A549 (cell line): ENCODE measurements at regions of chr9 and their contacts with region 1.

Region 1: DNA sequence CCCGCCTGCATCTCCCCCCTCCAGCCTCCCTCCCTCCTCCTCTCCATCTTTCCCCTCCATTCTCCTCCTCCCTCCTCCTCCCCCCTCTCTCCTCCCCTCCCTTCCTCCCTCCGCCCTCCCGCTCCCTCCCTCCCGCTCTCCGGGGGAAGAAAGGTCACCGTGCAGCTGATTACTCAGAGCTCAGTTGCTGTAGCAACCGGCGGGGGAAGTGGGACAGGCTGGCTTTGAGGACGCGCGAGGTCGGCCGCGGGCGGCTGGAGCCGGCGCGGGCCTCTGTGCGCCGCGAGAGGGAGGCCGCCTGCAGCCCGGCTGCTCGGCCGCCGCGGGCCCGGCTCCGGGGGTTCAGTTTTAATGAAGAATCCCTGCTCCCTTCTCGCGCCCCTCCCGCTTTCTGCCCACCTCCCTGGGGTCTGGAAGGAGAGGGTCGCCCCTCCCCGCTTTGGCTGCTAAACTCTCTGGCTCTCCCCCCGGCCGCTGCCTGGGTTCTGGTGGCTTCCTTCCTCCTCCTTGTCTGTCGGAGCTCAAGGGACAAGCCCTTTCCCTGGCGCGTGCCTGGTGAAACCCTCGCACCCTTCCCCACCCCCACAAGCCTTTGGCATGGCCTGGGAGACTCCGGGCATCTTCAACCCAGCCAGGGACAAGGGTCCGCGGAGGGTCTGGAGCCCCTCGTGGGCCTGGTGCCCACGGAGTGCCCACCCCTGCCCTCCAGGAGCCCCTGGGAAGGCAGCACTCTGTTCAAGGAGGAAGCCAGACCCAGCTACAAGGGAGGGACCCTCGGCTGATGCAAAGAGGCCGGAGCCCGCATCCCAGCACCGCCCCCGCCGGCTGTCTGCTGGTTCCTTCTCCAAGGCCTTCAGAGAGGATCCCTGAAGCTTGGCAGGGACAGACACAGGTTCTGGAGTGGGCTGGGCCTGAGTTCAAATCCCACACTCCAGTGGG is 160.3 kb downstream of the C9orf50 start:
- DNase-seq: peak; percentile 97 to 99
- ATAC-seq: peak; percentile 87 to 88
- H3K4me3 ChIP-seq: peak overlapping the region; percentile 37
- H3K27ac ChIP-seq: peak overlapping the region; percentile 98
- H3K4me1 ChIP-seq: peaks cover 46% of the 10 kb centered on the region
- CTCF ChIP-seq: peak; percentile 16; the same call in 1 of the 3 replicates
- EP300 ChIP-seq: peak; percentile 28 to 37; a peak in 2 of 5 replicates
- POLR2A ChIP-seq: no peak; the same call in none of the 2 replicates
- RAD21 ChIP-seq: no peak; a peak in 2 of 5 replicates

Region 2: DNA sequence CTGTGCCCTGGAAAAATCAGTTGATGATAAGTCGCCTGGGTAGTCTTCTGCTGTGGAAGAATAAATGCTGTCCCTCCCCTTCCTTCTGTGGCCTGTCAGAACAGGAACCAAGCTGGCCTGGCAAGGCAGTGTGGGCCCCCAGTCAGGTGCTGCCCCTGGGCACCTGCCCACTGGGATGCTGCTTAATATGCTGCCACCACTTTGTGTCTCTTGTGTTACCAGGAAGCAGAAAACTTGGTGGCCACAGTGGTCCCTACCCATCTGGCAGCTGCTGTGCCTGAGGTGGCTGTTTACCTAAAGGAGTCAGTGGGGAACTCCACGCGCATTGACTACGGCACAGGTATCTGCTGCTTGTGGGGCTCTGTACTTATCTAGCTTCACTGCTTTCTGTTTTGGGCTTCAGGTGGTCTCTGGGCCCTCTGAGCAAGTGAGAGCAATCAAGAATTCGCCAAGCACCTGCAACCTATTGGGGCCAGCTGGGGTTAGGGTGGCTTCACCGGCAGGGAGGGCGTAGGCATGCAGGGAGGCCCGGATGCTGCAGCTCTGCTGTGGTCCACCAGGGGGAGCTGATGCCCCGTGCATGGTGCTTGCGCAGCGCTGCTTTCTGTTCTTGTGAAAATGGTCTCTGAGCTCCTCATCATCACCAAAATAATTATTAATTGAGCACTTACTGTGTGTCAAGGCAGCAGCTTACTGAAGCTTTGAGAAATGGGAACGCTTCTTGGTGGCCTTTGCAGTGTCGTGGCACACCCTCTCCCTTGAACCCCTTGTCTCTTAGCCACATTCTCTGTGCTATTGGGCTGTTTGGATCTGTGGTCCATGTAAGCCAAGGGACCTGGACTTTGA is 329.1 kb before region 1 on chr9:
- CTCF ChIA-PET with region 1: interaction called, 10 read pairs
- POLR2A ChIA-PET with region 1: no interaction called
- DNase-seq: peak; percentile 72 to 93
- ATAC-seq: peak; percentile 93 to 96
- H3K4me3 ChIP-seq: no peak overlapping the region
- H3K27ac ChIP-seq: peak overlapping the region; percentile 30 to 63; a peak in 4 of 6 replicates
- H3K4me1 ChIP-seq: peaks cover 7% of the 10 kb centered on the region; the same call in 1 of the 3 replicates
- CTCF ChIP-seq: peak; percentile 94
- EP300 ChIP-seq: no peak
- POLR2A ChIP-seq: no peak
- RAD21 ChIP-seq: peak; percentile 93 to 95

Region 3: DNA sequence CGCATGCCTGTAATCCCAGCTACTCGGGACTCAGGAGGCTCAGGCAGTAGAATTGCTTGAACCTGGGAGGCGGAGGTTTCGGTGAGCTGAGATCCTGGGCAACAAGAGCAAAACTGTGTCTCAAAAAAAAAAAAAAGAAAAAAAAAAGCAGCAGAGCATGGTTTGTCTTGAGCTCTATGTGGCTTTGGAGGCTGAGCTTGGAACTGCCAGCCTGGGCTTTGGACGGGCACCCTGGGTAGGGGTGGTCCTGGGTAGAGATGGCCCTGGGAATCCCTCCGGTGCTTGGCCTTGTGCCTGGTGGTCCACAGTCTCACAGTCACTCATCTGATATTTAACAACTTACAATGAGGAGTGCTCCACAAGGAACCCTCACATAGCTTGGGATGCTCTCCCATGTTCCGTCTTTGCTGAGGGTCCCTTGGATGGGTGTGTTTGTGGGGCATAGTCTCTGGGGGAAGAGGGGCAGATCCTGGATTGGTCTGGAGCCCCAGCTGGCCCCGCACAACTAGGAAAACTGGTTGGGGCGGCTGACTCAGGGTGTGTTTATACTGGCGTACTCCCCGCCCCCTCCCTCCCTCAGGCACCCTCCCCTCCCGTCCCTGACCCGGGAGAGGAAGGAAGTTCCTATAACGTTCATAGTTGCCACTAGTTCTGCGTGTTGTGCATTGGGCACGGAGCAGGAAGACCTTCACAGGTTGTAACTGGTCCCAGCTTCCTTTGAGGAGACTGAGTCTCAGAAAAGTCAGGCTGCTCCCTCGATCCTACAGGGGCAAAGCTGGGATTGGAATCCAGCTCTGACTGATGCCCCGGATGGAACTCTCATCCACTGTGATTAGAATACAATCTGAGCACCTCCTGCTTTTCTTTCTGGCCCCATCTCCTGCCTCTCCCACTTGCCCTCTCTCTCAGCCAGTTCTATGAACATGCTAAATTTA is 293.7 kb before region 1 on chr9:
- CTCF ChIA-PET with region 1: no interaction called
- POLR2A ChIA-PET with region 1: interaction called, 10 read pairs
- DNase-seq: peak; percentile 79 to 97
- ATAC-seq: peak; percentile 79 to 88
- H3K4me3 ChIP-seq: peak overlapping the region; percentile 9; the same call in 1 of the 3 replicates
- H3K27ac ChIP-seq: peak overlapping the region; percentile 94 to 99
- H3K4me1 ChIP-seq: peaks cover 48% of the 10 kb centered on the region
- CTCF ChIP-seq: no peak
- EP300 ChIP-seq: no peak
- POLR2A ChIP-seq: peak; percentile 70
- RAD21 ChIP-seq: no peak

Region 4: DNA sequence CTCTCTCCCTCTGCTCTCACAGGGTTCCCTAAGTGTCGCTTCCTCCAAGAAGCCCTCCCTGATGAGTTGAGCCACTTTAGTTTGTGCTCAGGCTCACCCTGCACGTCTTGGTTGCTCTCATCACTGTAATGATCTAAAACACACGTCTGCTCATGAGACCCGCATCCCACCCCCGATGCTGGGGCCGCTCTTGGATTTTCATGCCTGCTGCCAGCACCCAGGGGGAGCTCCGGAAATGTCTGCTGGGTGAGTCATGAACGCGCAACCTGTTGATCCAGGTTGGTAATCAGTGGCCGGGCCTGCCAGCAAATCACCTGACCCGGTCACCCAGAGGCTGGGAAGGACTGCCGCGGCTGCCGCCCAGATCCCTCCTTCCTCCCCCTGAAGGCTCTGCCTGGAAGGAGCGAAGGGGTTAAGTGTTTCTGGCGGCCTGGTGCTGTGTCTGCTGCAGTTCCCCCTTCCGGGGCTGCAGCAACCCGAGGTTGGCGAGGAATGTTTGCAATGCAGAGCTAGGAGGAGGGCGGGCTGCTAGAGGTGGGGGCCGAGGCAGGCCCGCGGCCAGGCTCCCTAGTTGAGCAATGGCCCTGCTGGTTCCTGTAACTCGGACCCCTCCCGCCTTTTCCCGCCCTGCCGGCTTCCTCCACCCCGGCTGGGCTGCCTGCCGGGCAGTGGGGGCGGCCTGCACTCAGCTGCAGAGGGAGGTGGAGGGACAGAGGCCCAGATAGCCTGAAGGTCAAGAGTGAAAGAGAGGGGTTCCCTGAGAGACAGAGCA is 126.5 kb before region 1 on chr9:
- CTCF ChIA-PET with region 1: interaction called, 4 read pairs
- POLR2A ChIA-PET with region 1: interaction called, 22 read pairs
- DNase-seq: peak; percentile 95 to 99
- ATAC-seq: peak; percentile 93 to 94
- H3K4me3 ChIP-seq: peak overlapping the region; percentile 7; the same call in 1 of the 3 replicates
- H3K27ac ChIP-seq: peak overlapping the region; percentile 99 to 100
- H3K4me1 ChIP-seq: peaks cover 58% of the 10 kb centered on the region
- CTCF ChIP-seq: peak; percentile 13; the same call in 1 of the 3 replicates
- EP300 ChIP-seq: peak; percentile 95 to 98
- POLR2A ChIP-seq: peak; percentile 4; the same call in 1 of the 2 replicates
- RAD21 ChIP-seq: peak; percentile 25 to 78; a peak in 4 of 5 replicates

Region 5: GRCh38 chr9:129413537-129414376 is 46.8 kb before region 1 on chr9:
- CTCF ChIA-PET with region 1: no interaction called
- POLR2A ChIA-PET with region 1: interaction called, 16 read pairs
- DNase-seq: peak; percentile 86 to 97
- ATAC-seq: peak; percentile 80 to 84
- H3K4me3 ChIP-seq: peak overlapping the region; percentile 41
- H3K27ac ChIP-seq: peak overlapping the region; percentile 98 to 100
- H3K4me1 ChIP-seq: peaks cover 63% of the 10 kb centered on the region
- CTCF ChIP-seq: no peak
- EP300 ChIP-seq: peak; percentile 8 to 58; a peak in 2 of 5 replicates
- POLR2A ChIP-seq: no peak
- RAD21 ChIP-seq: peak in 1 of 2 experiments; percentile 60; a peak in 3 of 5 replicates

Region 6: GRCh38 chr9:129473523-129474229 is 13.1 kb after region 1 on chr9:
- CTCF ChIA-PET with region 1: interaction called, 12 read pairs
- POLR2A ChIA-PET with region 1: interaction called, 3 read pairs
- DNase-seq: no peak
- ATAC-seq: no peak
- H3K4me3 ChIP-seq: no peak overlapping the region
- H3K27ac ChIP-seq: peak overlapping the region; percentile 76 to 99; a peak in 5 of 6 replicates
- H3K4me1 ChIP-seq: peaks cover 57% of the 10 kb centered on the region
- CTCF ChIP-seq: no peak
- EP300 ChIP-seq: no peak
- POLR2A ChIP-seq: no peak
- RAD21 ChIP-seq: no peak

Region 7: DNA sequence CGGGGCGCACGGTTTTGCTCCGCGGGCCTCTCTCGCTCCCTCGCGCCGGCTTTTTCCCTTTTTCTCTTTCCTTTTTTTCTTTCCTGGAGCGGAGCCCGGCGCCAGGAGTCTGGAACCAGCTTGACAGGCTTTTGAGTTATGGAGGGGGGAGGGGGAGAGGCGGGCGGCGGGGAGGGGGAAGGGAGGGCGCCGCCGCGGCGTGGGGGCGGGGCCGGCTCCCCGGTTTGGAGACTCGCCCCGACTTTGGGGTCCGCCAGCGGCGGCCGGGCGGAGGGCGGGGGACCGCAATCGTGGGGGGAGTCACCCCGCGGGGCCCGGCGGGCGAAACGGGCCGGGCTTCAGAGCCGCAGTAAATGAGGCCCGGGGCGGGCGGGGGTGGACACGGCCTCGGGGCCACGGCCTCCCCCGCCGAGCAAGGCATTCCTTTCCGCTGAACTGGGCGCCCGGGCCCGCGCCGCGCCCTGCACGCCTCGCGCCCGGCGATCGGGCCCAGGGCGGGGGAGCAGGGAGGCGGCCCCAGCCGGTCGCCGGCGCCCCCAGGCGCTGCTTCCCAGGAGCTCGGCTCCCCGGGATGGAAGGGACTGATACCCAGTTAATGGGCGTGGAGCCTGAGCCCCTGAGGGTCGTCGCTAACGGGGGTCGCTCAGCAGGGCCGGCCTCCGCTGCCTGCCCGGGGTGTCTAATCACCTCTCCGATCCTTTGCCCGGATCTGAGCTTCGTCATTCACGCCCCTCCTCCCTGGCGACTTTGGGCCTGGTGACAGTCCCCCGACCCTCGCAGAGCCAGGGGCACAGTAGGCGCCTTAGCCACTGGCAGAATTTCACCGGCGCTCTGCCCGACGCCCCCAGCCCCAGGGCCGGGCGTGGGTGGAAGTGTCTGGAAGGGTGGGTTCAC is 22.2 kb after region 1 on chr9:
- CTCF ChIA-PET with region 1: interaction called, 27 read pairs
- POLR2A ChIA-PET with region 1: interaction called, 72 read pairs
- DNase-seq: peak in 1 of 2 experiments; percentile 86
- ATAC-seq: peak; percentile 47 to 64
- H3K4me3 ChIP-seq: peak overlapping the region; percentile 47
- H3K27ac ChIP-seq: peak overlapping the region; percentile 99 to 100
- H3K4me1 ChIP-seq: peaks cover 90% of the 10 kb centered on the region
- CTCF ChIP-seq: no peak; the same call in 2 of the 3 replicates
- EP300 ChIP-seq: peak; percentile 71 to 93; a peak in 4 of 5 replicates
- POLR2A ChIP-seq: peak; percentile 29; the same call in 1 of the 2 replicates
- RAD21 ChIP-seq: peak in 1 of 2 experiments; percentile 43; a peak in 2 of 5 replicates